Gastrocnemius medialis (tissue), 4 donors: ENCODE measurements at regions of chr16 and their contacts with region 1.

Region 1: DNA sequence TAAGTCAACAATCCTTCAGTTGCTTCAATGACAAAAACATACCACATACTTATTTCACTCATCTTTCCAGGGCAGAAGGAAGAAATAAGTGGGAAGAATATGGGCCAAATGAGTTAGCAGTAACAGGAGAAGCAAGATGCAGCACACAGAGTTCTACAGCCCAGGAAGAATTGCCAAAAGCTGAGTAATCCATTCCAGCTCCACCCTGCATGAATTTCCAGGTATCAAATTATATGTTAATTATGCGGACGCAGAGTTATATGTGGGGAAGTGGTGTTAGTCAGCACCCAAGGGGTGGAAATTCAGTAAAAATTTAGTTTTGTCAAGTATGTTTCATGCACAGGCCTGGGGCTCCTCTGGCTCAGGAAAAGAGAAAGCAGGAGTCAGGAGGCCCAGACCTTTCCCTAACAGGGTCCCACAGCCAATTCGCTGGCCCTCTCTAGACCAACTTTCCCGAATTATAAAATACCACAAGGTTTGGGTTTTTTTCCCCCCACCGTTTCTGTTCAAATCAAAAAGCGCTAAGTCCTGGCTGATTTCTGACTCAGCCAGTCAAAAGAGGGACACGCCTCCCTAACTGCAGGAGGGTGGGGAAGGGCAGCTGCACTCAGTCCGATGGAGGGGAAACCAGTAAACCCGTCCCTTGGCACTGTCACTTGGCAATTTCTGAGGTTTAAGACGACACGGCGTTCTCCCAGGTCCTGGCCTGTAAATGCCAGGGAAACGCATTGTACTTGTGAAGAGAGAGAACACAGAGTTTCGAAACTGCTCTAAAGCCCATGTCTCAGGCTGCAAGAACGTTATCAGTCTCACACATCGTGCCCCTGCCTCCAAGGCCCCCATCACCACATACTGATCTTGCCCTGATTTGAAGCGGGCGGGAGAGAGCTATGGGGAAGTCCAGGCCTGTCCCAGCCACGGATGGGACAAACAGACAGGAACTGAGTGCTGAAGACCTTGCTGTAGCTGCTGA is 58.1 kb downstream of the ZFHX3 start:
- DNase-seq: peak; percentile 97 to 99
- ATAC-seq: peak; percentile 61 to 66
- H3K4me3 ChIP-seq: peak overlapping the region; percentile 23 to 41 (median 36)
- H3K27ac ChIP-seq: peak overlapping the region; percentile 89 to 99 (median 96)
- H3K4me1 ChIP-seq: peaks cover 92 to 95% of the 10 kb centered on the region in 2 donors
- H3K27me3 ChIP-seq: no peaks in the 10 kb centered on the region
- CTCF ChIP-seq: no peak
- POLR2A ChIP-seq: peak; percentile 34 to 64

Region 2: GRCh38 chr16:72961121-72961763 is 28.6 kb before region 1 on chr16:
- in situ Hi-C with region 1: no loop called
- intact Hi-C with region 1: loop called (anchors 1 kb)
- DNase-seq: peak; percentile 85 to 89
- ATAC-seq: peak; percentile 86 to 87
- H3K4me3 ChIP-seq: peak overlapping the region; percentile 20 to 34 (median 21)
- H3K27ac ChIP-seq: peak overlapping the region; percentile 81 to 91 (median 81)
- H3K4me1 ChIP-seq: peaks cover 39 to 52% of the 10 kb centered on the region in 2 donors
- H3K27me3 ChIP-seq: no peaks in the 10 kb centered on the region
- CTCF ChIP-seq: peak in 4 of 5 experiments; percentile 28 to 44 (median 34)
- POLR2A ChIP-seq: peak in 1 of 2 donors; percentile 20

Region 3: DNA sequence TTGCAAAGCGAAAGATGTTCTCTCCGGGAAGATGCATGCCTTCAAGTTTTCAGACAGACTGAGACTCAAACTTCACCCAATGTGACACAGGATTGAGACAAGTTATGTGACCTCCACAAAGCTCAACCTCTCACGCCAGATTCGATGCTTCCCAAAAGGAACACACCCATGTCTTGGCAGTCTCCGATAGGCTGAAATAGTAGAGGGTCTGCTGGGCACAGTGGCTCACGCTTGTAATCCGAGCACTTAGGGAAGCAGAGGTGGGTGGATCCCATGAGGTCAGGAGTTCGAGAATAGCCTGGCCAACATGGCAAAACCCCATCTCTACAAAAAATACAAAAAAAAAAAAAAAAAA is 36.0 kb after region 1 on chr16:
- in situ Hi-C with region 1: no loop called
- intact Hi-C with region 1: loop called (anchors 2 kb)
- DNase-seq: no peak
- ATAC-seq: no peak
- H3K4me3 ChIP-seq: no peak overlapping the region
- H3K27ac ChIP-seq: peak overlapping the region; percentile 78 to 89 (median 82)
- H3K4me1 ChIP-seq: peaks cover 69 to 91% of the 10 kb centered on the region in 2 donors
- H3K27me3 ChIP-seq: no peaks in the 10 kb centered on the region
- CTCF ChIP-seq: no peak
- POLR2A ChIP-seq: no peak

Region 4: DNA sequence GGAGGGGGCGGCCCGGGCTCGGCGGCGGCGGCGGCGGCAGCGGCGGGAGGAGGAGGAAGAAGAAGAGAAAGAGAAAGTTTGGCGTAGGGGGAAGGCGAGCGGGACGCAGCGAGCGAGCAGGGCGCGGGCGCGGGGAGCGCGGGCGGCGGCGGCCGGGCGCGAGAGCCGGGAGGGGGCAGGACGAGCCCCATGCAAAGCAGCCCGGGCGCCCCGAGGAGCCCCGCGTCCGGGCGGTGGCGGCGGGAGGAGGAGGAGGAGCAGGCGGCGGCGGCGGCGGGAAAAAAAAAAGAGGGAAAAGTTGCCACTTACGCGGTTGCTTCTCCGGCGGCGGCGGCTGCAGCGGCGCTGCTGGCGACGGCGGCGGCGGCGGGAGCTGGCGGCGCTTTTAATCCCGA is 68.4 kb after region 1 on chr16:
- in situ Hi-C with region 1: loop called in 2 of 4 experiments (anchors 5 kb)
- intact Hi-C with region 1: no loop called
- DNase-seq: no peak
- ATAC-seq: peak; percentile 26 to 37
- H3K4me3 ChIP-seq: peak overlapping the region; percentile 64 to 75 (median 72)
- H3K27ac ChIP-seq: peak overlapping the region; percentile 94 to 99 (median 99)
- H3K4me1 ChIP-seq: peaks cover 38 to 58% of the 10 kb centered on the region in 2 donors
- H3K27me3 ChIP-seq: peaks cover 0 to 10% (median 0%) of the 10 kb centered on the region in 3 donors
- CTCF ChIP-seq: no peak
- POLR2A ChIP-seq: no peak